Dorsolateral prefrontal cortex (tissue), 120 donors: ENCODE measurements at regions of chr6 and their contacts with region 1.

Region 1: GRCh38 chr6:3281631-3282475 is 23.1 kb downstream of the PSMG4 start:
- DNase-seq: peak in 6 of 10 donors; percentile 29 to 55 (median 38)
- H3K4me3 ChIP-seq: no peak overlapping the region
- H3K27ac ChIP-seq: peak overlapping the region in 58 of 59 donors; percentile 18 to 85 (median 66)
- H3K27me3 ChIP-seq: no peaks in the 10 kb centered on the region
- CTCF ChIP-seq: no peak

Region 2: GRCh38 chr6:3509336-3509735 is 227.5 kb after region 1 on chr6:
- intact Hi-C with region 1: loop called in 1 of 2 experiments (anchors 5 kb)
- DNase-seq: no peak
- H3K4me3 ChIP-seq: no peak overlapping the region
- H3K27ac ChIP-seq: no peak overlapping the region
- H3K27me3 ChIP-seq: no peaks in the 10 kb centered on the region
- CTCF ChIP-seq: no peak

Region 3: GRCh38 chr6:3732345-3733141 is 450.7 kb after region 1 on chr6:
- intact Hi-C with region 1: loop called (anchors 2 kb)
- DNase-seq: peak; percentile 69 to 87 (median 85)
- H3K4me3 ChIP-seq: peak overlapping the region in 6 of 59 donors; percentile 7 to 40 (median 10)
- H3K27ac ChIP-seq: peak overlapping the region in 6 of 59 donors; percentile 7 to 25 (median 10)
- H3K27me3 ChIP-seq: no peaks in the 10 kb centered on the region
- CTCF ChIP-seq: peak; percentile 64 to 98 (median 92)

Region 4: GRCh38 chr6:3990692-3991501 is 709.0 kb after region 1 on chr6:
- intact Hi-C with region 1: loop called (anchors 5 to 10 kb)
- DNase-seq: peak; percentile 77 to 91 (median 87)
- H3K4me3 ChIP-seq: peak overlapping the region; percentile 36 to 72 (median 59)
- H3K27ac ChIP-seq: peak overlapping the region in 44 of 59 donors; percentile 9 to 83 (median 67)
- H3K27me3 ChIP-seq: no peaks in the 10 kb centered on the region
- CTCF ChIP-seq: peak; percentile 39 to 93 (median 84)